Activated CD4-positive, alpha-beta memory T cell treated with anti-CD3 and anti-CD28 coated beads for 36 hours (primary cell): ENCODE measurements at regions of chr5 and their contacts with region 1.

Region 1: GRCh38 chr5:113061846-113062780 is 85.5 kb downstream of the DCP2 start:
- DNase-seq: no peak
- H3K4me3 Mint-ChIP-seq: no peak overlapping the region
- H3K27ac Mint-ChIP-seq: no peak overlapping the region
- H3K4me1 Mint-ChIP-seq: peaks cover 23% of the 10 kb centered on the region
- H3K27me3 Mint-ChIP-seq: no peaks in the 10 kb centered on the region

Region 2: GRCh38 chr5:113050721-113051382 is 11.3 kb before region 1 on chr5:
- CTCF ChIA-PET with region 1: interaction called, 3 read pairs
- POLR2A ChIA-PET with region 1: interaction called, 4 read pairs
- intact Hi-C with region 1: loop called (anchors 1 kb)
- DNase-seq: peak; percentile 77
- H3K4me3 Mint-ChIP-seq: no peak overlapping the region
- H3K27ac Mint-ChIP-seq: peak overlapping the region; percentile 51
- H3K4me1 Mint-ChIP-seq: peaks cover 23% of the 10 kb centered on the region
- H3K27me3 Mint-ChIP-seq: no peaks in the 10 kb centered on the region

Region 3: DNA sequence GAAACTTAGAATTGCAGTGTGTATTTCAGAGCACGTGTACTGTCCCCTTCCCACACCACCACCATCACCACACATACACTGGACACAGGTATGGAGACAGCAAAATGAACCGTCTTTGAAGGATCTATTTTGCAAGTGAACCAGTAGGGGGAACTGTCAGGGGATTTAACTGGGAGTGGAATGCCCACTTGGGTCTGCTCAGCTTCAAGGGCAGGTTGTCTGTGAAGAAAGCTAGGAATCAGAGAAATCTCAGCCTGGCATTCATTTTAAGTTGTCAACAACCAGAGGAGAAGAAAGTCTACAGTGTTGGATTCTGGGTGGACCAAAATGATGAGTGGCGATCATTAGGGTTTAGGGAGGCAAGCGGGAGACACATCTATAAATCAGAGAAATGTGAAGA is 61.5 kb after region 1 on chr5:
- CTCF ChIA-PET with region 1: no interaction called
- POLR2A ChIA-PET with region 1: no interaction called
- intact Hi-C with region 1: no loop called
- DNase-seq: no peak
- H3K4me3 Mint-ChIP-seq: no peak overlapping the region
- H3K27ac Mint-ChIP-seq: no peak overlapping the region
- H3K4me1 Mint-ChIP-seq: no peaks in the 10 kb centered on the region
- H3K27me3 Mint-ChIP-seq: no peaks in the 10 kb centered on the region